ENCODE measurements at regions of chr5 and their contacts with region 1.

Region 1: DNA sequence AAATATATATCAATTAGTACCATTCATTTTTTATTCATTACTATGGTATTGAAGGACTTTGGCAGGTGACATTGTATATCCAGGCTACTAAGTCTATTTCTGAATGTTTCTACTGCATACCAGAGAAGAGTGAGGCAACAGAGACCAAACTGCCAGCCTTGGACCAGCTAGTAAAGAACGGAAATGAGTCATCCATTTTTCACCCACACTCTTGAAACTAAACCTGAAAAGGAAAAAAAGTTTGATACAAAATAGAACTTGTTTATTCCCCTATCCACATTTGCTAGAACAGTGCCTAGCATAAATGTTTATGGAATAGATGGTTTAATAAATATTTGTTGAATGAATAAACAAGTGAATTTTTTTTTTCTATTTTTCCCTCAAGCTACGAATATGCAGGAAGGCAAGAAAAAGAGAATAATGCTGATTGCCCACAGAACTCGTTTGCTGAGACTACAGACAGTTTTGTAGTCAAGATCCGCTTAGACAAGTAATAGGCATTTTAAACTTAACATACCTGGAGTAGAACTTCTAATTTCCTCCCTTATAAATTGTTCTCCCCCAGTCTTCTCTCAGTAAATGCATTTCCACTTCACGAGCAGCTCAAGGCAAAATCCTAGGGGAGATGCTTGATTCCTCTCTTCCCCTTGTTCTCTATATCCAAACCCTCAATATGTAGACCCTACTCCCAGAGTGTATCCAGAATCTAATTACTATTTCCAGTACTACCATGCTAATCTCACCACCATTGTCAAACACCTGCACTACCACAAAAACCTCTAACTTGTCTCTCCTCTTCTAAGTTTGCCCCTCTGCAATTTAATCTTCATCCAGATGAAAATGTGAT is 146.2 kb upstream of the RASA1 start:
- DNase-seq: peak; percentile 0 to 79 (median 30)
- ATAC-seq: peak; percentile 76
- H3K4me3 ChIP-seq: no peak overlapping the region
- H3K4me3 Mint-ChIP-seq: peak overlapping the region; percentile 38
- H3K27ac ChIP-seq: peak overlapping the region; percentile 2 to 74
- H3K27ac Mint-ChIP-seq: peak overlapping the region; percentile 78
- H3K4me1 ChIP-seq: peaks cover 28% of the 10 kb centered on the region
- H3K4me1 Mint-ChIP-seq: peaks cover 44% of the 10 kb centered on the region
- H3K27me3 ChIP-seq: no peaks in the 10 kb centered on the region
- H3K27me3 Mint-ChIP-seq: no peaks in the 10 kb centered on the region
- CTCF ChIP-seq: no peak

Region 2: DNA sequence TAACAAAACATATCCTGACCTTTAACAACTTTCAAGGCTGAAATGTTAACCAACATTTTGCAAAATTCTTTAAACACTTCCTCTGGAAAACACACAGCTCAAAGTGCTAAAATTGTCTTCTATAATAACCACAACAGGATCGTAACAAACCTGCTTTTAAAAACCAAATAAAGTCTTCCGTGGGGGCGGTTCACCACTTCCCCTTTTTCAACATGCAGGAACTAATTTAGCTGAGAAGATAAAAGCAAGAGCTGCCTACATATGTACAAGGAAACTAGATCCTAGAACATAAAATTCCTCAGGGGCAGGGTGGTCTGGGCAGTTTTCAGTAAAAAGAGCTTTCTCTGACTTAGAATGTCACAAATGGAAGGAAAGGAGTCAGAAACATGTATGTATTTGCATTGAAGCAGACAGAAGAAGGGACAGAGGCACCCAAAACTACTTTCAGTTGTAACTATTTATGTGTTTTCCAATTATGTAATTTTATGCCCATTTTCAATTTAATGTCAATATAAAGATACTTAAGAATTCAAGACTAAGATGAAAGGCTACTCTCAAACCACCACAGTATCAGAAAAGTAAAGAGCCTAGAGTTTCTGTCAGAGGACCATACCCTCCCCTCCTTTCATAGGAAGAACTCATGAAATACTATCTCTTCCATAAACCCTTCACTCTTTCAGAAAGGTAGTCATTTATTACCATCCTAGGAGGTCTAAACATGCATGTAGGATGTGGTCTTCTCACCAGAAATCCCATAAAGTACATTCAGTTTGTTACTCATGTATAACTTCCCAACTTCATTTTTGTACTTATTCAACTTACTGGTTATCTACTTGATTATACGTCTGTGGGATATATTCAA is 39.8 kb before region 1 on chr5:
- CTCF ChIA-PET with region 1: no interaction called
- POLR2A ChIA-PET with region 1: interaction called, 3 read pairs
- intact Hi-C with region 1: loop called in 1 of 2 experiments (anchors 1 kb)
- DNase-seq: peak in 8 of 9 experiments; percentile 9 to 72 (median 38)
- ATAC-seq: peak; percentile 64
- H3K4me3 ChIP-seq: peak overlapping the region in 1 of 2 experiments; percentile 4
- H3K4me3 Mint-ChIP-seq: peak overlapping the region; percentile 68
- H3K27ac ChIP-seq: peak overlapping the region in 1 of 2 experiments; percentile 56
- H3K27ac Mint-ChIP-seq: peak overlapping the region; percentile 64
- H3K4me1 ChIP-seq: peaks cover 39% of the 10 kb centered on the region
- H3K4me1 Mint-ChIP-seq: peaks cover 58% of the 10 kb centered on the region
- H3K27me3 ChIP-seq: no peaks in the 10 kb centered on the region
- H3K27me3 Mint-ChIP-seq: no peaks in the 10 kb centered on the region
- CTCF ChIP-seq: no peak

Measured in CD8-positive, alpha-beta T cell (primary cell).